Activated naive CD8-positive, alpha-beta T cell treated with anti-CD3 and anti-CD28 coated beads, Interleukin-2, amount 10 ng/mL, durations not matched to agents 7 days and 5 days (primary cell): ENCODE measurements at regions of chr10 and their contacts with region 1.

Region 1: GRCh38 chr10:32378363-32379317 is 31.7 kb upstream of the EPC1 start:
- DNase-seq: peak; percentile 84
- ATAC-seq: peak; percentile 98
- H3K4me3 Mint-ChIP-seq: no peak overlapping the region
- H3K27ac Mint-ChIP-seq: no peak overlapping the region
- H3K4me1 Mint-ChIP-seq: peaks cover 16% of the 10 kb centered on the region
- H3K27me3 Mint-ChIP-seq: no peaks in the 10 kb centered on the region

Region 2: GRCh38 chr10:32346134-32346550 is 32.5 kb before region 1 on chr10:
- POLR2A ChIA-PET with region 1: interaction called, 12 read pairs
- DNase-seq: peak; percentile 95
- ATAC-seq: peak; percentile 89
- H3K4me3 Mint-ChIP-seq: peak overlapping the region; percentile 87
- H3K27ac Mint-ChIP-seq: peak overlapping the region; percentile 98
- H3K4me1 Mint-ChIP-seq: peaks cover 45% of the 10 kb centered on the region
- H3K27me3 Mint-ChIP-seq: no peaks in the 10 kb centered on the region

Region 3: DNA sequence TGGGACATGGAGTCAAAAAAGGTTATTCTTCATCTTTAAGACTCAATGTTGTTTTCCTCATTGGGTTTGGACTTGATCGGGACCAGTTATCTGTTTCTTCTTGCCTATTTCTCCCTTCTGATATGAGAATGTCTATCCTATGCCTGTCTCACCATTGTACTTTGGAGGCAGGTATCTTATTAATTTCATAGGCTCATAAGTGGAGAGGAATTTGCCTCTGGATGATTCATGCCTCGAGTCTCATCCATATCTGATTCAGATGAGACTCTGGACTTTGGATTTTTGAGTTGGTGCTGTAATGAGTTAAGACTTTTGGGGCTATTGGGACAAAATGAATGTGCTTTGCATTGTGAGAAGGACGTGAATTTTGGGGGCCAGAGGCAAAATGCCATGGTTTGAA is 31.1 kb after region 1 on chr10:
- POLR2A ChIA-PET with region 1: no interaction called
- DNase-seq: no peak
- ATAC-seq: no peak
- H3K4me3 Mint-ChIP-seq: no peak overlapping the region
- H3K27ac Mint-ChIP-seq: no peak overlapping the region
- H3K4me1 Mint-ChIP-seq: peaks cover 3% of the 10 kb centered on the region
- H3K27me3 Mint-ChIP-seq: no peaks in the 10 kb centered on the region

Region 4: DNA sequence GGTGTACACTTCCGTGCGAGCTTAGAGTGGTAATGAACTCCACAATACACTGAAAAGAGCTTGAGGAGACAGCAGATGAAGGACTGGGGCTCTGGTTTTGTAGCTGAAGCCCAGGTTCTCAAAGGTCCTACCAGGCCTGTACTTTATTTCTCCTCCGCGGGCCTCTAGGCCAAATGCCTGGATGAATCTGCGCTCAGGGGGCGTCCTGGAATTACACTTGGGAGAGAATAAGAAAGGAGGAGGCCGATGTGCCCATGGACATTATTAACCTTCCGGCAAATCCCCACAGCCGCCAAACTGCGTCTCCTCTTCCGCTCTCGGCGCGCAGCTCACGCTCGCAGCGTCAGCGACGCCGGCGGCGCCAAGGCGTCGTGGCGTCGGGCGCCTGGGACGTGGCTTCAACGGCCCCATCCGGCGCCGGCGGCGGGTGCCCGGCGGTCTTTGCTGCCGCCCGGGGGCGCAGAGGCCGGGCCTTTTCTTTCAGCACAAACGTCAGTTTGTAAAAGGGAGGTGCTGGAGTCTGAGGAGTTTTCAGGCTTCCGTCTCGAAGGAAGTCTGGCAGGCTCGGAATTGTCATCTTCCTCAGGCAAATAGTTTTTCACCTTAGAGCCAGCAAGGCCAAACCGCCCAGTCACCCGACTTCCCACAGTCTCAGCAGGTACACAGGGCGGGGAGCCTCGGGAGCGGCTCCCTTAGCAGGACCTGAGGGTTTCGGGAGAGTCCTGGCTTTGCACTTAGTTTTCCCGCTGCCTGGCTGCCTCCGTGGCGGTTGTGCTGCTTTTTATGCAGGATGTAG is 67.3 kb after region 1 on chr10 and contains the start of gene CCDC7:
- POLR2A ChIA-PET with region 1: interaction called, 34 read pairs
- DNase-seq: peak; percentile 92
- ATAC-seq: peak; percentile 97
- H3K4me3 Mint-ChIP-seq: peak within 1 kb of the TSS; percentile 97
- H3K27ac Mint-ChIP-seq: peak within 1 kb of the TSS; percentile 97
- H3K4me1 Mint-ChIP-seq: peaks cover 12% of the 10 kb centered on the region
- H3K27me3 Mint-ChIP-seq: no peaks in the 10 kb centered on the region
- total RNA-seq, gene CCDC7: 28.4 to 34.5 TPM